BJ (cell line): ENCODE measurements at regions of chr20 and their contacts with region 1.

Region 1: GRCh38 chr20:49610701-49611538 is 43.0 kb upstream of the PTGIS start:
- DNase-seq: no peak
- H3K4me3 ChIP-seq: peak overlapping the region; percentile 6; the same call in 1 of the 2 replicates
- H3K27me3 ChIP-seq: peaks cover 4% of the 10 kb centered on the region
- CTCF ChIP-seq: peak; percentile 99

Region 2: DNA sequence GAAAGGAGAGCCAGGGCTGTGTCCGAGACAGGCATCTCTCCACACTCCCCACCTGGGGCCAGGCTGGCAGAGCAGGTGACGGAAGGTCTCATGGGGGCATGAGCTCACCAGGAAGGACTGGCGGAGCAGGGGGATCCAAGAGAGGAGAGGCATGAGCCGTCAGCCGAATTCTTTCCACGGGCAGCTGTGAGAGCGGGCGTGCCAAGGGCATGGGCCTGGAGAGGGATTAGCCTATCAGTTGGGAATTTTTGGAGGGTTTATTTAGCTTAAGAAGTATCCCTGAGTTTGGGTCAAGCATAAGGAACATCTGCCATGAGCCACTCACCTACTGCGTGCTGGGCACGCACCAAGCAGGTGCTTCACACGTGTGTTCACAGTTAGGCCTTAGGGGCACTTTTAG is 272.9 kb before region 1 on chr20:
- CTCF ChIA-PET with region 1: interaction called, 42 read pairs
- POLR2A ChIA-PET with region 1: no interaction called
- DNase-seq: no peak
- H3K4me3 ChIP-seq: no peak overlapping the region
- H3K27me3 ChIP-seq: peaks cover under 1% of the 10 kb centered on the region; the same call in 1 of the 2 replicates
- CTCF ChIP-seq: no peak

Region 3: DNA sequence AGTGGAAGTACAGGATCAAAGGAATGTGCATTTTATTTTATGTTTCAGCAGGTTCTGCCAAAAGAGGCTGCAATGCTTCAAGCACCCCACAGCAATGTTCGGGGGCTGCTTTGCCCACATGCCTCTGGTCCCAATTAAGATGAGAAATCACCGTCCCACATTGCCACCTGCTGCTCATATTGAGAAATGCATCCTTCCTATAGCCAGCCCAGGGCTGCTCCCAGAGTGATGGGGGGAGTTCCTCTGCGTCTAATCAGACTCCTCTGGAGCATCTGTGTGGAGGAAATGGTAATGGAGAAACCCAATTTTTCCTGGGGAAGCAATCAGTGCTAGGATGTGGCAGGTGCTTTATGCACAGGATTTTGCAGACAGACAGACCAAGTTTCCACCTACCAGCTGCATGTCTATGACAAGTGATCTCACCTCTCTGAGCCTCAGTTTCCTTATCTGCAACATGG is 76.6 kb before region 1 on chr20:
- CTCF ChIA-PET with region 1: interaction called, 485 read pairs
- POLR2A ChIA-PET with region 1: no interaction called
- DNase-seq: no peak
- H3K4me3 ChIP-seq: no peak overlapping the region
- H3K27me3 ChIP-seq: no peaks in the 10 kb centered on the region
- CTCF ChIP-seq: peak; percentile 79

Region 4: GRCh38 chr20:49549811-49550551 is 60.9 kb before region 1 on chr20:
- CTCF ChIA-PET with region 1: interaction called, 485 read pairs
- POLR2A ChIA-PET with region 1: no interaction called
- DNase-seq: no peak
- H3K4me3 ChIP-seq: no peak overlapping the region
- H3K27me3 ChIP-seq: peaks cover 4% of the 10 kb centered on the region; the same call in 1 of the 2 replicates
- CTCF ChIP-seq: no peak

Region 5: DNA sequence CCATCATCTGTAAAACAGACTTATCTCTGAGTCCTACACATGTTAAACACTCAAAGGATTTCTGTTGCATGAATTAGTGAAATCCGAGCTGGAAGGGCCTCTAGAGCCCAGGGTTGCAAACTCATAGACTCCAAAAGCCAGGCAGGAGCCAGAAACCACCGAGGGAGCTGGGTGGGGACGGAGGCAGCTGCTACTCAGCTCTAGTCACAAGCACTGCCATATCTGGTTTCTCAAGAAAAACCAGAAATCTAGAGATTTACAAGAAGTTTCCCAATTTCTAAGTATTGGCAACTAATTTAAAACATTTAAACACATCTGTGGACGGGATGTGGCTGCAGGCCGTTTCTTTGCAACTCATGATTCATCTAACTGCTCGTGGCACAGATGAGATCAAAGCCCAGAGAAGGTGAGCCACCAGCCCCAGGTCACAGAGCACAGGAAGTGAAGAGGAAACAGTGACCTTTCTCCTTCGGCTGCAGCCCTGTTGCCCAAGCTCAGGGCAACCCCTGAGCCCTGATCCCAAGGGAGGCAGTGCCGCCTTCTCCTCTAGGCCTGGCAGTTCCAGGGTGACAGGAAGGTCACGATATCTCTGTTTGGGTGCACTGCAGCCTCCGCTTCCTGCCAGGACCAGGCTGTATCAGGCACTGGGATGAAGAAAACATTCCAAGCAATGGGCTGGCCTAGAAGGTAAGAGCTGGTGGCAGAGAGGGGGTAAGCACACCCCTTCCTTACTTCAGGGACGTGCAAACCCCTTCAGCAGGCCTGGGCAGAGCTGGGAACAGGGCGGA is 16.6 kb before region 1 on chr20:
- CTCF ChIA-PET with region 1: interaction called, 15 read pairs
- POLR2A ChIA-PET with region 1: no interaction called
- DNase-seq: peak; percentile 92
- H3K4me3 ChIP-seq: no peak overlapping the region
- H3K27me3 ChIP-seq: no peaks in the 10 kb centered on the region
- CTCF ChIP-seq: no peak

Region 6: GRCh38 chr20:49838546-49838945 is 227.6 kb after region 1 on chr20:
- CTCF ChIA-PET with region 1: interaction called, 183 read pairs
- POLR2A ChIA-PET with region 1: no interaction called
- DNase-seq: no peak
- H3K4me3 ChIP-seq: no peak overlapping the region
- H3K27me3 ChIP-seq: no peaks in the 10 kb centered on the region
- CTCF ChIP-seq: no peak

Region 7: DNA sequence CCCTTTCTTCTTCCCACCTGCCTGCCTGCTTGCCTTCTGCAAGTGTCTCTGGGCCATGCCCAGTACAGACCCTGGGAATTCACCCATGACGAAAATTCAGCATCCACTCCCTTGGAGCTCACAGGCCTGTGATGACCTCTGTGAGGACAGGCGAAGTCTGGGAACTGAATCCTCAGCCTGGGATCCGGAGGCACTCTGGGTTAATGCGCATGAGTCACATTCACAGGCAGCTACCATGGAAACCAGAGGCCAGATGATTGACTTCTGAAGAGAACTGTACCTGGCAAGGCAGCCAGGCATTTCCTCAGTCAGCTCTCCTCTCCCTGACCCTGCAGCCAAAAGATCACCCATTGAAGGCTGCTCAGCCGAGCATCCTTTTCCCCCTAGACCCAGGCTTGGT is 242.7 kb after region 1 on chr20:
- CTCF ChIA-PET with region 1: interaction called, 42 read pairs
- POLR2A ChIA-PET with region 1: no interaction called
- DNase-seq: no peak
- H3K4me3 ChIP-seq: no peak overlapping the region
- H3K27me3 ChIP-seq: no peaks in the 10 kb centered on the region
- CTCF ChIP-seq: no peak